ENCODE measurements at regions of chr5 and their contacts with region 1.

Region 1: GRCh38 chr5:31531888-31532710 is at the starts of genes C5orf22 and DROSHA:
- H3K4me3 Mint-ChIP-seq: peak within 1 kb of the TSS; percentile 81
- H3K27ac Mint-ChIP-seq: peak within 1 kb of the TSS; percentile 84
- H3K4me1 Mint-ChIP-seq: peaks cover 41% of the 10 kb centered on the region
- H3K27me3 Mint-ChIP-seq: no peaks in the 10 kb centered on the region

Region 2: DNA sequence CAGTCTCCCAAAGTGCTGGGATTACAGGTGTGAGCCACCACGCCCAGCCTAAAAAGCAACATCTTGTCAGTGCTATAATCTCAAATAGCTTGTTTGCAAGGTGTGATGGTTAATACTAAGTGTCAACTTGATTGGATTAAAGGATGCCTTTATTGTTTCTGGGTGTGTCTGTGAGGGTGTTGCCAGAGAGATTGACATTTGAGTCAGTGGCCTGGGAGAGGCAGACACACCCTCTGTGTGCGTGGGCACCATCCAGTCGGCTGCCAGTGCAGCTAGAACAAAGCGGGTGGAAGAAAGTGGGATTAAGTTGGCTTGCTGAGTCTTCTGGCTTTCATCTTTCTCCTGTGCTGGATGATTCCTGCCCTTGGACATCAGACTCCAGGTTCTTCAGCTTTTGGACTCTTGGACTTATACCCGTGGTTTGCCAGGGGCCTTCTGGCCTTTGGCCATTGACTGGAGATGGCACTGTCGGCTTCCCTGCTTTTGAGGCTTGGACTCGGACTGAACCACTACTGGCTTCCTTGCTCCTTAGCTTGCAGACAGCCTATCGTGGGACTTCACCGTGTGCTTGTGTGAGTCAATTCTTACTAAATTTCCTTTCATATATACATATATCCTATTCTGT is 1936.8 kb after region 1 on chr5:
- intact Hi-C with region 1: loop called (anchors 10 kb)
- H3K4me3 Mint-ChIP-seq: no peak overlapping the region
- H3K27ac Mint-ChIP-seq: no peak overlapping the region
- H3K4me1 Mint-ChIP-seq: peaks cover 13% of the 10 kb centered on the region
- H3K27me3 Mint-ChIP-seq: no peaks in the 10 kb centered on the region

Measured in dendritic cell treated with granulocyte-macrophage colony-stimulating factor and Interleukin-4, amounts not matched to agents 40 ng/mL and 50 ng/mL, for 4 days (primary cell).